GM12878 (cell line): ENCODE measurements at regions of chr14 and their contacts with region 1.

Region 1: DNA sequence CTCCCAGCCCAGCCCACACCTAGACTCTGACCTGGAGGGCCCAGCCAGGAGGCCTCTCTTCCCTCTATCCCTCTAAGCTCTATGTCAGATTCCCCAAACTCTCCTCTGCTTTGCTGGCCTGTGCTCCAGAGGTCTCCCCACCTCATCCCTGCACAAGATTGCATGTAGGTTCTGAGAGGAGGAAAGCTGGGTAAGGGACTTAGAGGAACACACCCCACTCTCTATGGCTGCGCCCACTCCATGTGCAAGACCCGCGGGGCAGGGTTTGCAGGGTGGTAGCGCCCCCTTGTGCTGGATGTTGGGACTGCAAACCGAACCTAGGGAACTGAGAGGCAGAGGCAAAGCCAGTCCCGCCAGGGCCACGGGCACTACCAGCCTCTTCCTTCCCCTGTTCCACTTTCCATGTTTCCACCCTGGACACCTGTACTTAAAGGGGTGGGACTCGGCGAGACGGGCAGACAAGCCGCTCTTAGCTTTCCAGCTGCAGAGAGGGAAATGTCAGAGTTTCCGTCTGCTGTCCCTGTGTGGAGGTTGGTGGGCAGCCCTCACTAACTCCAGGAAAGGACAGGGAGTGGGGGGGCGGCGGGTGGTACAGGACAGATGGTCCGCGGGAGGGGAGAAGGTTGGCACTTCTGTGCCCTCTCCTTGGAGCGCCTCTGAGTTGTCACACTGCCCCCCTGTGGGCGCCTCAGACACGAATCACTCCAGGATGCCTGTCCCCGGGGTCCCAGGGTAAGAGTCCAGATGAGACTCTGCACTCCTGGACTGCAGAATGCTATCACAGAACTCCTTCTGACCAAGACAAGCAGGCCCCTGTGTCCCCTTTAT is 16.8 kb downstream of the MMP14 start:
- DNase-seq: peak; percentile 63
- ATAC-seq: peak; percentile 95
- H3K4me3 ChIP-seq: peak overlapping the region; percentile 75
- H3K27ac ChIP-seq: peak overlapping the region; percentile 89
- H3K4me1 ChIP-seq: peaks cover 17% of the 10 kb centered on the region
- H3K27me3 ChIP-seq: no peaks in the 10 kb centered on the region
- CTCF ChIP-seq: peak; percentile 85 to 98 (median 93)
- EP300 ChIP-seq: no peak
- POLR2A ChIP-seq: no peak
- RAD21 ChIP-seq: peak; percentile 98

Region 2: DNA sequence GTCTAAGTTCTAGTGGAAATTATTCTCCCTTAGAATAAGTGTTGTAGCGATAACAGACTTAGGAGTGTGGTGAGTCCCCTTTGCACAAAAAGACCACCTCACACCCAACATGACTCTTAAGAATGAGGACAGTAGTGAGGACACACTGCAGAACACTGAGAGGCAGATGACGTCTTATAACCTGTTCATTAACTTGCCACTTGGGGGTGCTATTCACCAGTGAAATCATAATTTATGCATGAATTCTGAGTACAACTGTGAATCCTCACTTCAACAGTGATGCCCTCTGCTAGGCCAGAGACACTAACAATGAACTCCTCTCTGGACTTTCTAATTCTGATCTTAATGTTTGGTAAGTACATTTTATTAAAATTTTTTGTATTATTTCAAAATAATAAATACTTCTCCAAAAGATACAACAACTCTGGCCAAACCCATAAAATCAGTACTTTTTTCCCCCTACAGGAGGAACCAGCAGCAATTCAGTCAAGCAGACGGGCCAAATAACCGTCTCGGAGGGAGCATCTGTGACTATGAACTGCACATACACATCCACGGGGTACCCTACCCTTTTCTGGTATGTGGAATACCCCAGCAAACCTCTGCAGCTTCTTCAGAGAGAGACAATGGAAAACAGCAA is 538.9 kb before region 1 on chr14:
- CTCF ChIA-PET with region 1: interaction called, 3 read pairs
- POLR2A ChIA-PET with region 1: no interaction called
- RAD21 ChIA-PET with region 1: interaction called, 3 read pairs
- SMC1A ChIA-PET with region 1: no interaction called
- in situ Hi-C with region 1: loop called (anchors 10 kb)
- intact Hi-C with region 1: no loop called
- DNase-seq: peak; percentile 48
- ATAC-seq: peak; percentile 98
- H3K4me3 ChIP-seq: no peak overlapping the region
- H3K27ac ChIP-seq: no peak overlapping the region
- H3K4me1 ChIP-seq: no peaks in the 10 kb centered on the region
- H3K27me3 ChIP-seq: no peaks in the 10 kb centered on the region
- CTCF ChIP-seq: peak; percentile 55 to 80 (median 69); a peak in 5 of 6 replicates
- EP300 ChIP-seq: no peak
- POLR2A ChIP-seq: no peak
- RAD21 ChIP-seq: peak; percentile 75

Region 3: GRCh38 chr14:22653012-22653621 is 200.0 kb before region 1 on chr14:
- CTCF ChIA-PET with region 1: interaction called, 135 read pairs
- POLR2A ChIA-PET with region 1: no interaction called
- RAD21 ChIA-PET with region 1: interaction called, 64 read pairs
- SMC1A ChIA-PET with region 1: interaction called, 79 read pairs
- in situ Hi-C with region 1: no loop called
- intact Hi-C with region 1: loop called (anchors 1 kb)
- DNase-seq: no peak
- ATAC-seq: peak; percentile 89
- H3K4me3 ChIP-seq: no peak overlapping the region
- H3K27ac ChIP-seq: no peak overlapping the region
- H3K4me1 ChIP-seq: no peaks in the 10 kb centered on the region
- H3K27me3 ChIP-seq: no peaks in the 10 kb centered on the region
- CTCF ChIP-seq: peak; percentile 87 to 92 (median 88)
- EP300 ChIP-seq: no peak
- POLR2A ChIP-seq: no peak
- RAD21 ChIP-seq: peak; percentile 91

Region 4: DNA sequence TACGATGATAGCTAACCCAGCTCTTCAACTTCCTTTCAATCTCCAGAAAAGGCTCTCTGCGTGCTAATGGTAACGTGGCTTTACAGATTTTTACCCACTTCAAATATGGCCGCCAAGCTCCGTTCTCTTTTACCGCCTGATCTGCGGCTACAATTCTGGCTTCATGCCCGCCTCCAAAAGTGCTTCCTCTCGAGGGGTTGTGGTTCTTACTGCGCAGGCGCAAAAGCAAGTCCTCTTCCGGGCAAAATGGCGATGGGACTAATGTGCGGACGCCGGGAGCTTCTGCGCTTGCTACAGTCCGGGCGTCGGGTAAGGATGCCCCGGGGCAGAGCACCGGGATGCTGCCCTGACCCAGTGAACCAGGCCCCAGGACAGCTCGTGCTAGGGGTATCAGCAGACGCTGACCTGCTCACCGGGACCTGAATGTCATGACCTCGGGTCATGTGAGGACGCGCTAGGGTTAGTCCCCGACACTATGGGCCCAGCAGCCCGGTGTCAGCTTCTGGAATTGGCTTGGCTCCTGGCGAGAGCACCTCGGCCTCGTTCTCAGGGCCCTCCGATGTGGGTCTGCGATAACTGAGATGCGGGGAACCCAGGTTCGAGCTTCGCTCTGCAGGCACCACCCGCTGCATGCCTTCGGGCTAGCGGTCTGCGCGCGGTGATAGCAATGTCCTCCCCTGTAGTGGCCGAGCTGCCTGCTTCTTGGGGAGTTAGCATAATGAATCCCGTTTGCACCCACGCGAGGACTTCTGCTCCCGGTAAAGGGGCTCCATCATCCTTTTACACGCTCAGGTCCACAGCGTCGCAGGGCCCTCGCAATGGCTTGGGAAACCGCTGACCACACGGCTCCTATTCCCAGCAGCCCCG is 86.5 kb before region 1 on chr14 and contains the start of gene OXA1L:
- CTCF ChIA-PET with region 1: interaction called, 92 read pairs
- POLR2A ChIA-PET with region 1: no interaction called
- RAD21 ChIA-PET with region 1: interaction called, 10 read pairs
- SMC1A ChIA-PET with region 1: interaction called, 51 read pairs
- in situ Hi-C with region 1: no loop called
- intact Hi-C with region 1: no loop called
- DNase-seq: peak; percentile 92
- ATAC-seq: peak; percentile 89
- H3K4me3 ChIP-seq: peak within 1 kb of the TSS; percentile 91
- H3K27ac ChIP-seq: peak within 1 kb of the TSS; percentile 98
- H3K4me1 ChIP-seq: no peaks in the 10 kb centered on the region; the same call in 1 of the 2 replicates
- H3K27me3 ChIP-seq: no peaks in the 10 kb centered on the region
- CTCF ChIP-seq: no peak
- EP300 ChIP-seq: no peak
- POLR2A ChIP-seq: peak; percentile 92
- RAD21 ChIP-seq: no peak
- polyA plus RNA-seq, gene OXA1L: 110 to 116 TPM

Region 5: GRCh38 chr14:22802860-22803686 is 50.1 kb before region 1 on chr14:
- CTCF ChIA-PET with region 1: interaction called, 14 read pairs
- POLR2A ChIA-PET with region 1: no interaction called
- RAD21 ChIA-PET with region 1: interaction called, 10 read pairs
- SMC1A ChIA-PET with region 1: interaction called, 9 read pairs
- in situ Hi-C with region 1: no loop called
- intact Hi-C with region 1: no loop called
- DNase-seq: no peak
- ATAC-seq: peak; percentile 80
- H3K4me3 ChIP-seq: peak overlapping the region; percentile 61
- H3K27ac ChIP-seq: peak overlapping the region; percentile 98
- H3K4me1 ChIP-seq: peaks cover 58% of the 10 kb centered on the region
- H3K27me3 ChIP-seq: no peaks in the 10 kb centered on the region
- CTCF ChIP-seq: no peak
- EP300 ChIP-seq: 0 out of 4 replicates have a peak, but pooled peaks of 1 of the 2 experiments have one; percentile 11
- POLR2A ChIP-seq: no peak
- RAD21 ChIP-seq: no peak

Region 6: DNA sequence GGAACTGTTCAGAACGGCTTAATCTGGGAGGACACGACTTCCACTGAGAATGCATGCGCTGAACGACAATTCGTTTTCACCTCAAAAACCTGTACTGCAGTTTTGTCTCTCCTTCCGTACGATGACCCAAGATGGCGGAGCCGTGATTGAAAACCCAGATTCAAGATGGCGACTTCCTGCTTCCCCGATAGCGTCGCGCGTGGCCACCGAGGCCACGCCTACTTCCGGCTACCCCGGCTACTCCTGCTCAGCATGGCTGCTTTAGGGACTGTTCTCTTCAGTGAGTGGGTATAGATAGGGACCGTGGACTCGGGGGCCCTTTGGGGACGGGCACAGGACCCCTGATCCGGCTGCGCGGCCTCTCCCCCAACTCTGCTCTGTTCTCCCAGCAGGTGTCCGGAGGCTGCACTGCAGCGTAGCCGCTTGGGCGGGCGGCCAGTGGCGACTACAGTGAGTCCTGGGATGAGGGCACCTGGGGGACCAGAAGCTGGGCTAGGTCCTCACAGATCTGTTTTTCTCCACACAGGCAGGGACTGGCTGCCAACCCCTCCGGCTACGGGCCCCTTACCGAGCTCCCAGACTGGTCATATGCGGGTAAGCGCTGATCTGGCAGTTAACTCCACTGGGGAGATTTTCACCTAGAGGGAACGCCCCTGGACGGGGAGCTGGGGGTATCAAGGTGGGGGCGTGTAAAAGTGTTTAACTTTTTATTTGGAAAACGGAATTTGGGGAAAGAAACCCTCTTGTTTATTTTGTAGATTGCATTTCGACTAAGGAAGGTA is 23.3 kb before region 1 on chr14 and contains the start of gene MRPL52:
- CTCF ChIA-PET with region 1: interaction called, 324 read pairs
- POLR2A ChIA-PET with region 1: interaction called, 11 read pairs
- RAD21 ChIA-PET with region 1: interaction called, 130 read pairs
- SMC1A ChIA-PET with region 1: interaction called, 104 read pairs
- in situ Hi-C with region 1: no loop called
- intact Hi-C with region 1: no loop called
- DNase-seq: no peak
- ATAC-seq: peak; percentile 95
- H3K4me3 ChIP-seq: peak within 1 kb of the TSS; percentile 98
- H3K27ac ChIP-seq: peak within 1 kb of the TSS; percentile 41
- H3K4me1 ChIP-seq: peaks cover 12% of the 10 kb centered on the region
- H3K27me3 ChIP-seq: no peaks in the 10 kb centered on the region
- CTCF ChIP-seq: no peak
- EP300 ChIP-seq: no peak
- POLR2A ChIP-seq: peak; percentile 80
- RAD21 ChIP-seq: no peak
- polyA plus RNA-seq, gene MRPL52: 51.7 to 142 TPM

Region 7: DNA sequence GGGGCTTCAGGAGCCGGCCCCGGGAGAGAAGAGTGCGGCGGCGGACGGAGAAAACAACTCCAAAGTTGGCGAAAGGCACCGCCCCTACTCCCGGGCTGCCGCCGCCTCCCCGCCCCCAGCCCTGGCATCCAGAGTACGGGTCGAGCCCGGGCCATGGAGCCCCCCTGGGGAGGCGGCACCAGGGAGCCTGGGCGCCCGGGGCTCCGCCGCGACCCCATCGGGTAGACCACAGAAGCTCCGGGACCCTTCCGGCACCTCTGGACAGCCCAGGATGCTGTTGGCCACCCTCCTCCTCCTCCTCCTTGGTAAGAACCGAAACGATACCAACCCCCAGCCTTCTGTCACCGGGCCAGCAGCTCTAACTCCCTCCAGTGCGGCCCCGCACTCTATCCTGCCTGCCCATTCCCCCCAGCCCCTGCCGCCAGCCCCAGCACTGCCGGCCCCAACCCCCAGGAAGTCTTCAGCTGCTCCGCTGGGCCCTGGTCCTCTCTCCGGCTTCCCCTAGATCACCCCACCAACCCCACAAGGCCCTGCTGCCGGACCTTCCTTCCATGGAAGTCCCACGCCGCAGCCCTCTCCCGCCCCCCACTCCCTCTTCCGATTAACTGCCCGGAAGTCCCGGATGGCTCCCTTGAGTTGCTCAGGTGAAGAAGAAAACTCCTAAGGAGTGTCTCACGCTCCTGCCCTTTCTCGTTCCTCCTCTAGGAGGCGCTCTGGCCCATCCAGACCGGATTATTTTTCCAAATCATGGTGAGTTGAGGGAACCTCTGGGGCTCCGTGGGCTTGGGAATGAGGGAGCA is 19.1 kb after region 1 on chr14:
- CTCF ChIA-PET with region 1: interaction called, 54 read pairs
- POLR2A ChIA-PET with region 1: interaction called, 4 read pairs
- RAD21 ChIA-PET with region 1: interaction called, 8 read pairs
- SMC1A ChIA-PET with region 1: interaction called, 35 read pairs
- in situ Hi-C with region 1: no loop called
- intact Hi-C with region 1: no loop called
- DNase-seq: no peak
- ATAC-seq: peak; percentile 56
- H3K4me3 ChIP-seq: peak overlapping the region; percentile 74
- H3K27ac ChIP-seq: peak overlapping the region; percentile 93
- H3K4me1 ChIP-seq: peaks cover 8% of the 10 kb centered on the region
- H3K27me3 ChIP-seq: no peaks in the 10 kb centered on the region
- CTCF ChIP-seq: peak; percentile 95 to 98 (median 95)
- EP300 ChIP-seq: no peak
- POLR2A ChIP-seq: no peak
- RAD21 ChIP-seq: peak; percentile 75

Region 8: DNA sequence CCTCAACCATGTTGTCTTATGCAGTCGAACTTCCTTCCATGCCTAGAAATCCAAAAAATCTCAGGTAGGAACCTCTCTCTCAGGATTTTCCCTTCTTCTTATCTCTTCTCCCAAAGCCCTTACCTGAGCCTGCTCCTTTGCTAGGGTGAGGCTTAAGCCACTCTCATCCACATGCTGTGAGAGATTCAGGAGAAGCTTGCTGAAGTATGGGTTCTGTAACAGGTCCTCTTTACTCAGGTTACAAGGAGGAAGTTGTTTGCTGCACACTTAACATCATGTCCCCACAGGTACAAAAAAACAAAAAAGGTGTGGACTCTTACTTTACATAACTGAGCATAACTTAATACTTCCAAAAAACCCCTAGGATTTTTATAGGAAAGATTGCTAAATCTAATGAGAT is 99.3 kb after region 1 on chr14:
- CTCF ChIA-PET with region 1: no interaction called
- POLR2A ChIA-PET with region 1: no interaction called
- RAD21 ChIA-PET with region 1: no interaction called
- SMC1A ChIA-PET with region 1: no interaction called
- in situ Hi-C with region 1: no loop called
- intact Hi-C with region 1: no loop called
- DNase-seq: no peak
- ATAC-seq: no peak
- H3K4me3 ChIP-seq: no peak overlapping the region
- H3K27ac ChIP-seq: no peak overlapping the region
- H3K4me1 ChIP-seq: no peaks in the 10 kb centered on the region
- H3K27me3 ChIP-seq: no peaks in the 10 kb centered on the region
- CTCF ChIP-seq: no peak
- EP300 ChIP-seq: no peak
- POLR2A ChIP-seq: no peak
- RAD21 ChIP-seq: no peak